ENCODE measurements at regions of chr11 and their contacts with region 1.

Region 1: GRCh38 chr11:114075891-114076441 is 16.5 kb downstream of the ZBTB16 start:
- DNase-seq: peak in 4 of 5 donors; percentile 48 to 64 (median 52)
- H3K4me3 ChIP-seq: no peak overlapping the region
- H3K4me3 Mint-ChIP-seq: peak overlapping the region in 7 of 8 donors; percentile 32 to 89 (median 71)
- H3K27ac ChIP-seq: no peak overlapping the region
- H3K27ac Mint-ChIP-seq: peak overlapping the region; percentile 4 to 93 (median 54)
- H3K4me1 ChIP-seq: peaks cover 72% of the 10 kb centered on the region
- H3K4me1 Mint-ChIP-seq: peaks cover 57 to 88% (median 72%) of the 10 kb centered on the region in 4 donors
- H3K27me3 ChIP-seq: no peaks in the 10 kb centered on the region
- H3K27me3 Mint-ChIP-seq: no peaks in the 10 kb centered on the region

Region 2: GRCh38 chr11:114121804-114122504 is 46.0 kb after region 1 on chr11:
- CTCF ChIA-PET with region 1: no interaction called
- POLR2A ChIA-PET with region 1: no interaction called
- intact Hi-C with region 1: loop called (anchors 5 kb)
- DNase-seq: no peak
- H3K4me3 ChIP-seq: no peak overlapping the region
- H3K4me3 Mint-ChIP-seq: no peak overlapping the region
- H3K27ac ChIP-seq: no peak overlapping the region
- H3K27ac Mint-ChIP-seq: no peak overlapping the region
- H3K4me1 ChIP-seq: no peaks in the 10 kb centered on the region
- H3K4me1 Mint-ChIP-seq: peaks cover 3 to 18% (median 7%) of the 10 kb centered on the region in 4 donors
- H3K27me3 ChIP-seq: no peaks in the 10 kb centered on the region
- H3K27me3 Mint-ChIP-seq: peaks cover 3% of the 10 kb centered on the region in 2 donors